H1 (cell line): ENCODE measurements at regions of chr7 and their contacts with region 1.

Region 1: GRCh38 chr7:26078437-26079336 is 73.3 kb upstream of the NFE2L3 start:
- DNase-seq: peak; percentile 36 to 87
- H3K4me3 ChIP-seq: peak overlapping the region in 1 of 4 experiments; percentile 3; a peak in 1 of 8 replicates
- H3K27ac ChIP-seq: no peak overlapping the region
- H3K4me1 ChIP-seq: peaks cover 1 to 7% (median 3%) of the 10 kb centered on the region in 4 experiments; a peak in 3 of 7 replicates
- H3K27me3 ChIP-seq: no peaks in the 10 kb centered on the region; a peak in 2 of 7 replicates
- CTCF ChIP-seq: peak; percentile 49 to 64 (median 56)
- EP300 ChIP-seq: no peak
- POLR2A ChIP-seq: no peak
- RAD21 ChIP-seq: peak; percentile 46 to 66; a peak in 3 of 4 replicates

Region 2: DNA sequence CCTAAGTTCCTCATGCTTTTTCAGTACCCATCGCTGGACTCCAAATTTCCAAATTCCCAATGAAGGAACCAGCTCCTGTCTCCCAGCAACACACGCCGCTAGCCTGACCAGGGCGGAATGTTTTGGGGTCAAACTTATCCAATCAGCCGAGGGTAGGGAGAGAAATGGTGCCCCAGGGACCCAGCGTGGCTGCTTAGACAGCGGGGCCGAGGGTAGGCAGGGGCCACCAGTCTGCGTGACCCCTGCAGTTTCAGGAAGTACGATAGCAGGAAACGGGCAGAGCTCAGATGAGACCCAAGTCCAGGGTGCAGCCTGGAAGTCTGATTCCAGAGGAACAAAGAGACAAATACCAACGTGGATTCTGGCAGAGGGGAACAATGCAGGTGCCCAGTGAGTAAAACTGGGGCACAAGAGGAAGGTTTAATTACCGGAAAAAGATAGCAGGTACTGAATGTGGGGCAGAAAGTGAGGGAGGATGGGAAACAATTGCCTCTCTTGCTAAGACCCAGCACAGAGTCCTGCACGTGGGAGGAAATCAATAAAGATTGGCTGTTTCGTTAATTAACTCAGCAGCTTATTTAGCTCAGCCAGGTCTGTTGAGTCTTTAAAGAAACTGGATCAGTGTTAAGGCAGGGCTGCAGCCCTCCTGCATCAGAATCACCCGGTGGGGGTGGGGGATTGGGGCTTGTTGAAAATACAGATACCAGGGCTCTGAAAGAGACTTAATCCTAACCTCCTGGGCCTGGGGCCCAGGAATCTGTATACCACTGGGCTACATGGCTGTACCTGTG is 22.9 kb after region 1 on chr7:
- CTCF ChIA-PET with region 1: interaction called, 10 read pairs
- POLR2A ChIA-PET with region 1: interaction called, 3 read pairs
- DNase-seq: peak in 1 of 2 experiments; percentile 61
- H3K4me3 ChIP-seq: peak overlapping the region in 1 of 4 experiments; percentile 7; a peak in 1 of 8 replicates
- H3K27ac ChIP-seq: peak overlapping the region; percentile 53; the same call in 1 of the 2 replicates
- H3K4me1 ChIP-seq: peaks cover 7 to 16% (median 12%) of the 10 kb centered on the region in 4 experiments
- H3K27me3 ChIP-seq: no peaks in the 10 kb centered on the region
- CTCF ChIP-seq: no peak
- EP300 ChIP-seq: no peak
- POLR2A ChIP-seq: no peak; a peak in 1 of 3 replicates
- RAD21 ChIP-seq: 0 out of 4 replicates have a peak, but pooled peaks of 1 of the 2 experiments have one; percentile 2

Region 3: GRCh38 chr7:26136831-26137455 is 58.3 kb after region 1 on chr7:
- CTCF ChIA-PET with region 1: no interaction called
- POLR2A ChIA-PET with region 1: no interaction called
- DNase-seq: no peak
- H3K4me3 ChIP-seq: no peak overlapping the region
- H3K27ac ChIP-seq: no peak overlapping the region
- H3K4me1 ChIP-seq: no peaks in the 10 kb centered on the region
- H3K27me3 ChIP-seq: no peaks in the 10 kb centered on the region; a peak in 1 of 7 replicates
- CTCF ChIP-seq: no peak
- EP300 ChIP-seq: no peak
- POLR2A ChIP-seq: no peak
- RAD21 ChIP-seq: no peak